Calu3 (cell line): ENCODE measurements at regions of chr17 and their contacts with region 1.

Region 1: GRCh38 chr17:43483674-43484372 is at the start of gene DHX8:
- DNase-seq: peak; percentile 99
- H3K4me3 Mint-ChIP-seq: peak within 1 kb of the TSS; percentile 98
- H3K27ac Mint-ChIP-seq: peak within 1 kb of the TSS; percentile 98
- H3K4me1 Mint-ChIP-seq: peaks cover 20% of the 10 kb centered on the region
- H3K27me3 Mint-ChIP-seq: no peaks in the 10 kb centered on the region
- CTCF ChIP-seq: peak; percentile 100
- total RNA-seq, gene DHX8: 83.6 and 94.8 TPM in 2 replicates

Region 2: GRCh38 chr17:43360739-43361505 is 122.9 kb before region 1 on chr17:
- CTCF ChIA-PET with region 1: interaction called, 16 read pairs
- intact Hi-C with region 1: no loop called
- DNase-seq: peak; percentile 95
- H3K4me3 Mint-ChIP-seq: peak overlapping the region; percentile 72
- H3K27ac Mint-ChIP-seq: peak overlapping the region; percentile 100
- H3K4me1 Mint-ChIP-seq: peaks cover 42% of the 10 kb centered on the region
- H3K27me3 Mint-ChIP-seq: peaks cover 13% of the 10 kb centered on the region
- CTCF ChIP-seq: no peak

Region 3: GRCh38 chr17:43367737-43368242 is 116.0 kb before region 1 on chr17:
- CTCF ChIA-PET with region 1: interaction called, 40 read pairs
- intact Hi-C with region 1: no loop called
- DNase-seq: peak; percentile 60
- H3K4me3 Mint-ChIP-seq: peak overlapping the region; percentile 85
- H3K27ac Mint-ChIP-seq: peak overlapping the region; percentile 100
- H3K4me1 Mint-ChIP-seq: peaks cover 37% of the 10 kb centered on the region
- H3K27me3 Mint-ChIP-seq: peaks cover 9% of the 10 kb centered on the region
- CTCF ChIP-seq: no peak

Region 4: DNA sequence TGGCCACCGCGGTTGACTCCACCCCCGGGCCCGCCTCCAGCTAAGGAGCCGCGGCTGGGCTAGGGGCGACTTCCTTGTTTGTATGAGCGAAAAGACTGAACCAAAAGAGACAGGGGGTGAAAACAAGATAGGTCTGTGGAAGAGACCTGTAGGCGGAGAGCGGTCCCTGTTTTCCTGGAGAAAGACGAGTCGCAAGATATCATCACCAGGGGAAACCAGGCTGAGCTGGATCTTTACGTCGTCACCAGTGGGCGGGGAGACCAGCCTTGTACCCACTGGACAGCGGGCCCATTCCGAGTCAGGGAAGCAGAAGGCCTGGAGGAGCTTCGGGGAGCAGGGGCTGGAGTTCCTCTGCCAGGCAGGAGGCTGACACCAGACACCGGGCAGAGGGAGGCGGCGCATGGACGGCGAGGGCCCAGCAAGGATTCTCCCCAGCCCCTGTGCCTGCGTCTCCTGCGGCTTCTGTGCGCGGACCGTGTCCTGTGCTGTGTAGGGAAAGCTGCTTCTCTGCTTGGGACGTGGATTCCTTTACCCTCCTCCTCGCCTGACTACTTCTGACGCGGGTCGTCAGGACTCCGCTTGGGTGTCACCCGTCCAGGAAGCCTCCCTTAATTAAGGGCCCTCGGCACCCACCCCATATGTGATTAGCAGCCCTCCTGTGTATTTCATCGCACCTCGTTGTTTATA is 95.3 kb before region 1 on chr17:
- CTCF ChIA-PET with region 1: interaction called, 154 read pairs
- intact Hi-C with region 1: no loop called
- DNase-seq: peak; percentile 97
- H3K4me3 Mint-ChIP-seq: peak overlapping the region; percentile 70
- H3K27ac Mint-ChIP-seq: peak overlapping the region; percentile 69
- H3K4me1 Mint-ChIP-seq: peaks cover 9% of the 10 kb centered on the region
- H3K27me3 Mint-ChIP-seq: no peaks in the 10 kb centered on the region
- CTCF ChIP-seq: no peak

Region 5: GRCh38 chr17:43393944-43394482 is 89.8 kb before region 1 on chr17:
- CTCF ChIA-PET with region 1: interaction called, 154 read pairs
- intact Hi-C with region 1: loop called (anchors 1 kb)
- DNase-seq: peak; percentile 96
- H3K4me3 Mint-ChIP-seq: no peak overlapping the region
- H3K27ac Mint-ChIP-seq: no peak overlapping the region
- H3K4me1 Mint-ChIP-seq: peaks cover 9% of the 10 kb centered on the region
- H3K27me3 Mint-ChIP-seq: no peaks in the 10 kb centered on the region
- CTCF ChIP-seq: peak; percentile 98

Region 6: GRCh38 chr17:43434902-43435319 is 48.9 kb before region 1 on chr17:
- CTCF ChIA-PET with region 1: interaction called, 6 read pairs
- intact Hi-C with region 1: loop called (anchors 1 kb)
- DNase-seq: no peak
- H3K4me3 Mint-ChIP-seq: no peak overlapping the region
- H3K27ac Mint-ChIP-seq: no peak overlapping the region
- H3K4me1 Mint-ChIP-seq: peaks cover 34% of the 10 kb centered on the region
- H3K27me3 Mint-ChIP-seq: no peaks in the 10 kb centered on the region
- CTCF ChIP-seq: no peak